PC-9 (cell line): ENCODE measurements at regions of chr3 and their contacts with region 1.

Region 1: DNA sequence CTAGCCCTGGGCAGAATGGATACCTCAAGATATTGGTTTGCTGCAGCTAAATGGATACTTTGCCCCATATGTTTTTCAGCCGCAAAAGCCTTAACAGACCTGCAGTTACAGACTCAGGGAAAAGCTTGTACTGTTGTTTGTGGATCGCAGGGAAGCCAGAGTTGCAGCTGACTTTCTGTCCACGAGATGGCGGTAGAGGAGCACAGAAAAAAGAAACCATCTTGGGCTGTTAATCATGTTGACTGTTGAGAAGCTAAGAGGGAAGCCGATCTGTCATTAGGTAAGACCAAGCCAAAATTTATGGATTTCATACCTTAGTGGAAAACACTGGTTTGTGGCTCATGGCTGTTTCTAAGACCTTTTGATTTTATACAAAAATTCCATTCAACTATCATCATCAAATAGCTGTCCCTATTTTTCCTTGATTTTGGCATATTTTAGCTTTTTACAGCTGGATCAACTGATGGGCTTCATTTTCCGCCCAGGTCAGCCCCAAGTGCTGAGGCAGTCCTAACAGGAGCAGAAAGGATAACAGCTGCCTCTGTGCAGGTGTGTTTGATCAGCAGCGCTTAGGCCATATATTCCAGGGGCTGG is 205.7 kb upstream of the ZPLD1 start:
- DNase-seq: peak; percentile 77 to 87
- H3K4me3 ChIP-seq: no peak overlapping the region
- H3K27ac ChIP-seq: no peak overlapping the region
- H3K4me1 ChIP-seq: no peaks in the 10 kb centered on the region
- H3K27me3 ChIP-seq: no peaks in the 10 kb centered on the region
- CTCF ChIP-seq: peak; percentile 100

Region 2: GRCh38 chr3:101268971-101269671 is 960.0 kb before region 1 on chr3:
- CTCF ChIA-PET with region 1: interaction called, 10 read pairs
- POLR2A ChIA-PET with region 1: no interaction called
- intact Hi-C with region 1: no loop called
- DNase-seq: no peak
- H3K4me3 ChIP-seq: no peak overlapping the region
- H3K27ac ChIP-seq: no peak overlapping the region
- H3K4me1 ChIP-seq: no peaks in the 10 kb centered on the region
- H3K27me3 ChIP-seq: no peaks in the 10 kb centered on the region
- CTCF ChIP-seq: no peak

Region 3: DNA sequence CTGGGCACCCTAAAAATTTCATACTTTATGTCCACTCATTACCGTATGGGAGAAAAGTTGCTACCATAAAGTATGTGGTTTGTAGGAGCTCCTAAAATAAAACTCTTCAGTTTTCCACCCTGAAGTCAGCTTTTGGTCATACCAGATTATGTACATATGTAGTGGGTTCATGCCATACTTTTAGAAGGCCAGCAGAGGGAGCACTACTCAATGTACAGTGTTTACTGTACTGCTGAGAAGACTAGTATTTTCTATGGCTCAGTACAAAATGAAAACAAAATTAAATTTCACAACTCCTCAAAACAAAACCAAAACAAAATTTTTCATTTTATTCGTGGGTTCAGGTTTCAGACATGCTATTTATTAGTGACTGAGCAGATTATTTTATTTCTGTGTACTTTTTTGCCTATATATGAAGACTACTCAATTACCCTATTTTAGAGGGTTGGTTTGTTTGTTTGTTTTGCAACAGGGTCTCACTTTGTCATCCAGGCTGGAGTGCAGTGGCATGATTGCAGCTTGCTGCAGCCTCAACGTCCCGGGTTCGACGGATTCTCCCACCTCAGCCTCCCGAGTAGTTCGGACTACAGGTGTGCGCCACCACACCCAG is 425.9 kb before region 1 on chr3:
- CTCF ChIA-PET with region 1: interaction called, 17 read pairs
- POLR2A ChIA-PET with region 1: no interaction called
- intact Hi-C with region 1: no loop called
- DNase-seq: peak; percentile 24 to 68
- H3K4me3 ChIP-seq: no peak overlapping the region
- H3K27ac ChIP-seq: no peak overlapping the region
- H3K4me1 ChIP-seq: no peaks in the 10 kb centered on the region
- H3K27me3 ChIP-seq: no peaks in the 10 kb centered on the region
- CTCF ChIP-seq: peak; percentile 99

Region 4: GRCh38 chr3:102078854-102079253 is 150.3 kb before region 1 on chr3:
- CTCF ChIA-PET with region 1: interaction called, 4 read pairs
- POLR2A ChIA-PET with region 1: interaction called, 3 read pairs
- intact Hi-C with region 1: loop called (anchors 2 kb)
- DNase-seq: peak in 1 of 2 experiments; percentile 27
- H3K4me3 ChIP-seq: 0 out of 2 replicates have a peak overlapping the region, but pooled peaks have one; percentile 3
- H3K27ac ChIP-seq: peak overlapping the region; percentile 39
- H3K4me1 ChIP-seq: peaks cover 20% of the 10 kb centered on the region
- H3K27me3 ChIP-seq: no peaks in the 10 kb centered on the region
- CTCF ChIP-seq: no peak

Region 5: DNA sequence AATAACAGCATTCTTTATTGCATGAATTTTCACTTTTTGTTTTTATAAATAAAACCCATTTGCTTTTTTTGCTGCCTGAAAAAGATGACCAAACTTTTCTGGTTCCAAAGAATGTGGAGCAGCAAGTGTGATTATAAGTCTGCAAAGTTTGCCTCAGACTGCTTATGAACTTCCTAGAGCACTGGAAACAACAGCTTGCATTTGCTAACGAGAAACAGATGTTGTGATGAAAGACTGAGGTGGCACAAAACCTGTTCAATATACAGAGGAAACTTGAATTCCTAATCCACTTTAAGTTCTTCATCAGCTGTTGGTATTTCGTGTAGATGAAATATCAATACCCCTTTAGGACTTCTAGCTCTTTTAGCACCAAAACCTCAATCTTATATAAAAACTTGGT is 214.9 kb after region 1 on chr3:
- CTCF ChIA-PET with region 1: no interaction called
- POLR2A ChIA-PET with region 1: no interaction called
- intact Hi-C with region 1: no loop called
- DNase-seq: no peak
- H3K4me3 ChIP-seq: no peak overlapping the region
- H3K27ac ChIP-seq: no peak overlapping the region
- H3K4me1 ChIP-seq: no peaks in the 10 kb centered on the region
- H3K27me3 ChIP-seq: no peaks in the 10 kb centered on the region
- CTCF ChIP-seq: no peak

Region 6: DNA sequence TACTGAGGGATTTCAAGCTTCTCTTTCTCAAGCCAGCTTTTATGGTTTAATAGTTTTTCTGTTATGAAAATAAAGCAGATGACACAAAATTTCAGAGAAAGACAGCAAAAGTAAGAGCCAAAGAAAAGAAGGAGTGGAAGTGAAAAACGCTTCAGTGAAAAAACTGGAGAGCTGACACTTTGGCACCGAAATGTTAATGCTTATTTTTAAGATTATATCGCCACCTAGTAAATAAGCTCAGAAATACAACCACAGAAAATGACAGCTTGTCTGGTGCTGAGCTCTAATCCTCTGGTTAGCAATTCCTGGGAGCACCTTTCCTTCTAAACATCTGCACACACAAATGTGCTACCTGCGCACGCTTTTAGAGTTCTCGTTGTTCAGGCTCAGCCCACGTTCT is 307.3 kb after region 1 on chr3:
- CTCF ChIA-PET with region 1: interaction called, 103 read pairs
- POLR2A ChIA-PET with region 1: interaction called, 3 read pairs
- intact Hi-C with region 1: loop called (anchors 1 kb)
- DNase-seq: peak in 1 of 2 experiments; percentile 50
- H3K4me3 ChIP-seq: no peak overlapping the region; the same call in 1 of the 2 replicates
- H3K27ac ChIP-seq: no peak overlapping the region
- H3K4me1 ChIP-seq: peaks cover 9% of the 10 kb centered on the region; the same call in 1 of the 2 replicates
- H3K27me3 ChIP-seq: no peaks in the 10 kb centered on the region
- CTCF ChIP-seq: peak; percentile 78

Region 7: DNA sequence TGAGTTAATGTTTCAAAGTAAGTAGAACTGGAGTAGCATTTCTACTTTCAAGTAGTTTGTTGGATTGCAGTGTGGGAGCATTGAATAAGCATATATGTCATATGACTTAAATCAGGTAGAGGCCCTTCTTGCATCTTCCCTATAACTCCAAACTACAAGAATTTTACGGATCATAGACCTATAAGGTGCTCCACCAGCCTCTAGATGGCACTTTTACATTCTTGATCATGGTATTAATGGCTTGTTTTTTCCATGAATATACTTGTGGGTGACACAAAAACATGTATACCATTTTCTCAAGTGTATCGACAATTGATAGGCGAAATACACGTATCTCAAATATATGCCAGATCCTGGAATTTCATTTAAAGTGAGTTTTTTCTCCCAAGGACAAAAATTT is 516.7 kb after region 1 on chr3:
- CTCF ChIA-PET with region 1: no interaction called
- POLR2A ChIA-PET with region 1: no interaction called
- intact Hi-C with region 1: loop called (anchors 10 kb)
- DNase-seq: no peak
- H3K4me3 ChIP-seq: no peak overlapping the region
- H3K27ac ChIP-seq: no peak overlapping the region
- H3K4me1 ChIP-seq: no peaks in the 10 kb centered on the region
- H3K27me3 ChIP-seq: no peaks in the 10 kb centered on the region
- CTCF ChIP-seq: peak; percentile 48; the same call in 1 of the 2 replicates